K562 (cell line): ENCODE measurements at regions of chr6 and their contacts with region 1.

Region 1: DNA sequence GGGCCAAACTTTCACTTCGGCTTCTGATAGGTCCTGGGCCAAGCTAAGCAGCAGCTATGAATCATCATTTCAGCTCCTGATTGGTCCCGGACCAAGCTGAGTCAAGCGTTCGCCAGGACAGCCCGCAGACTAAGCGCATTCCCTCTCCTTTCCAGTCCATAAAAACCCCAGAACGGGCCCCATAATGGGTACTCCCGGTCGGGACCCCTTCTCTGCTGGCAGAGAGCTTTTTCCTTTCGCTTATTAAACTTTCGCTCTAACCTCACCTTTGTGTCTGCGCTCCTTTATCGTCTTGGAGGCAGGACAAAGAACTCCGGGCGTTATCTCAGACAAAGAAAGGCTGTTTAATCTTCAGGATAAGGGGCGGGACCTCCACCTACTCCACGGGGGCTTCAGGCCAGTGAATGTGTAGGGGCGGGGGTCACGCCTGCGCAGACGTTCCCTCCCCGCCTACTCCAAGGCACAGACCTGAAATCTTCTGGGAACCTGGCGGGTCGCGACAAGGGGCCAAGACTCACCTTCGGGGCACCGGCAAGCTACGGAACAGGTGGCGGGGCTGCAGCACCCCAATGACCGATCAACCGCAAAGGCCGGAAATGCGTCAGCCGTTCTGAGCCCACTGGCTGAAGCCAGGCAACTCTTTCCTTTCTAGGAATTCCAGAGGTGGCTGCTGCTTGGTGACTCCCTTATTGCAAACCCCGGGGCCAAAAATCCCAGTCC is at the start of gene ZSCAN31:
- DNase-seq: peak; percentile 97 to 99 (median 97)
- ATAC-seq: peak; percentile 91
- H3K4me3 ChIP-seq: peak within 1 kb of the TSS; percentile 69
- H3K27ac ChIP-seq: peak within 1 kb of the TSS; percentile 98
- H3K4me1 ChIP-seq: peaks cover 23 to 43% of the 10 kb centered on the region in 2 experiments
- H3K27me3 ChIP-seq: no peaks in the 10 kb centered on the region
- CTCF ChIP-seq: no peak
- EP300 ChIP-seq: peak; percentile 8; the same call in 1 of the 2 replicates
- POLR2A ChIP-seq: peak; percentile 99
- RAD21 ChIP-seq: peak in 1 of 2 experiments; percentile 17; a peak in 1 of 4 replicates
- polyA plus RNA-seq, gene ZSCAN31: 5.0 to 7.0 TPM

Region 2: GRCh38 chr6:27809939-27810767 is 525.6 kb before region 1 on chr6:
- CTCF ChIA-PET with region 1: no interaction called
- POLR2A ChIA-PET with region 1: interaction called, 4 read pairs
- in situ Hi-C with region 1: no loop called
- intact Hi-C with region 1: loop called (anchors 5 kb)
- DNase-seq: peak; percentile 70 to 96 (median 82)
- ATAC-seq: peak; percentile 60
- H3K4me3 ChIP-seq: peak overlapping the region; percentile 71
- H3K27ac ChIP-seq: peak overlapping the region; percentile 86
- H3K4me1 ChIP-seq: peaks cover 4 to 20% of the 10 kb centered on the region in 2 experiments; a peak in 4 of 5 replicates
- H3K27me3 ChIP-seq: no peaks in the 10 kb centered on the region
- CTCF ChIP-seq: peak in 2 of 3 experiments; percentile 25 to 36; a peak in 3 of 6 replicates
- EP300 ChIP-seq: 0 out of 2 replicates have a peak, but pooled peaks have one; percentile 2
- POLR2A ChIP-seq: peak; percentile 100
- RAD21 ChIP-seq: peak; percentile 10 to 35; a peak in 2 of 4 replicates

Region 3: GRCh38 chr6:27847706-27848105 is 488.0 kb before region 1 on chr6:
- CTCF ChIA-PET with region 1: no interaction called
- POLR2A ChIA-PET with region 1: no interaction called
- in situ Hi-C with region 1: no loop called
- intact Hi-C with region 1: no loop called
- DNase-seq: no peak
- ATAC-seq: peak; percentile 9; the same call in 2 of the 3 replicates
- H3K4me3 ChIP-seq: no peak overlapping the region
- H3K27ac ChIP-seq: no peak overlapping the region
- H3K4me1 ChIP-seq: no peaks in the 10 kb centered on the region
- H3K27me3 ChIP-seq: no peaks in the 10 kb centered on the region
- CTCF ChIP-seq: no peak
- EP300 ChIP-seq: no peak
- POLR2A ChIP-seq: 0 out of 2 replicates have a peak, but pooled peaks have one; percentile 17
- RAD21 ChIP-seq: no peak

Region 4: DNA sequence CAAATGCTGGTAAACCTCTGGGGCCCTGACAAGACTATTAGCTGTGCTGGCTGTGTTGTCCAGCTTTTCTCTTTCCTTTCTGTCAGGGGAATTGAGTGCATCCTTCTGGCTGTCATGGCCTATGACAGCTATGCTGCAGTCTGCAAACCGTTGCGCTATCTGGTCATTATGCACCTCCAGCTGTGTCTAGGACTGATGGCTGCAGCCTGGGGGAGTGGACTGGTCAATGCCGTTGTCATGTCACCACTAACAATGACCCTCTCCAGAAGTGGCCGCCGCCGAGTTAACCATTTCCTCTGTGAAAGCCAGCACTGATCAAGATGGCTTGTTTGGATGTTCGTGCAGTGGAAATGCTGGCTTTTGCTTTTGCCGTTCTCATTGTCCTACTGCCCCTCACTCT is 358.3 kb before region 1 on chr6:
- CTCF ChIA-PET with region 1: no interaction called
- POLR2A ChIA-PET with region 1: no interaction called
- in situ Hi-C with region 1: no loop called
- intact Hi-C with region 1: no loop called
- DNase-seq: peak in 3 of 4 experiments; percentile 18 to 68 (median 29)
- ATAC-seq: peak; percentile 98
- H3K4me3 ChIP-seq: no peak overlapping the region
- H3K27ac ChIP-seq: no peak overlapping the region
- H3K4me1 ChIP-seq: peaks cover 0 to 4% of the 10 kb centered on the region in 2 experiments; a peak in 1 of 5 replicates
- H3K27me3 ChIP-seq: no peaks in the 10 kb centered on the region
- CTCF ChIP-seq: peak in 2 of 3 experiments; percentile 15; a peak in 1 of 6 replicates
- EP300 ChIP-seq: peak; percentile 66
- POLR2A ChIP-seq: no peak
- RAD21 ChIP-seq: peak; percentile 13 to 48; a peak in 2 of 4 replicates

Region 5: GRCh38 chr6:28153546-28153945 is 182.2 kb before region 1 on chr6:
- CTCF ChIA-PET with region 1: no interaction called
- POLR2A ChIA-PET with region 1: interaction called, 11 read pairs
- in situ Hi-C with region 1: no loop called
- intact Hi-C with region 1: no loop called
- DNase-seq: no peak
- ATAC-seq: peak; percentile 42; the same call in 2 of the 3 replicates
- H3K4me3 ChIP-seq: no peak overlapping the region
- H3K27ac ChIP-seq: no peak overlapping the region
- H3K4me1 ChIP-seq: no peaks in the 10 kb centered on the region
- H3K27me3 ChIP-seq: no peaks in the 10 kb centered on the region
- CTCF ChIP-seq: no peak
- EP300 ChIP-seq: no peak
- POLR2A ChIP-seq: no peak
- RAD21 ChIP-seq: no peak

Region 6: DNA sequence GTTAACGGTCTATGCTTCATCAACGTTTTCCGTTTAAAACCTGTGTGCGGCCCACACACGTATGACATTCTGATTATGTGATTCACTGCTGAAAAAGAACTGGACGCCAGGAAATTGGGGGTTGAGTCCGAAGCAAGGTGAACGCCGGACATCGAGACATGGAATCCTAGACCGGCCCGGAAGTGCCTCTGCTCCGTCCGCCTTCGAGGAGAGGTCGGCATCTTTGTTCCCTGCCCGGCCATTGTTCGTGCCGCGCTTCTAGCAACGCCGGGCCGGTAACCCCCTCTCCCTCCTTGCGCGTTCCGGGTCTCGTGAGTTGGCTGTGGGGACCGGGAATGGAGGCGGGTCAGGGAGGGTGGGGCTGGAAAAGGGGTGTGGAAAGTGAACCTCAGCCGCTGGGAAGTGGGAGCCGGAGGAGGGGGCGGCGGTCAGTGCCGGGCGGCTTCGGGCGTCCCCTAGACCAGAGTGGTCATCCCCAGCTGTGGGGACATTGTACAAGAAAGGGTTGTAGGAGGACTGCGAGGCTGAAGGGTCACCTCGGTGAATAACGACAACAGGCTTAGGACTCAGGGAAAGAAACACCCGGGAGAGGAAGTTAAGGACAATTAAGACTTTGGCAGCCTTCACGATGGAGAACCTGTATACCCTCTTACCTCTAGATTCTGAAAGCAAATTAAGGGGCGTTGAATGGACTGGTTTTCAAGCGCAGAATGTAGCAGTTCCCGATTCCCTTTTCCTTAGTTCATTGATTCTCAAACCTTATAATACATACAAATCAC is 110.5 kb before region 1 on chr6 and contains the start of gene ZSCAN9:
- CTCF ChIA-PET with region 1: no interaction called
- POLR2A ChIA-PET with region 1: interaction called, 38 read pairs
- in situ Hi-C with region 1: no loop called
- intact Hi-C with region 1: loop called (anchors 5 kb)
- DNase-seq: peak; percentile 83 to 94 (median 90)
- ATAC-seq: peak; percentile 89
- H3K4me3 ChIP-seq: peak within 1 kb of the TSS; percentile 79
- H3K27ac ChIP-seq: peak within 1 kb of the TSS; percentile 85
- H3K4me1 ChIP-seq: peaks cover 7 to 47% of the 10 kb centered on the region in 2 experiments
- H3K27me3 ChIP-seq: no peaks in the 10 kb centered on the region
- CTCF ChIP-seq: no peak
- EP300 ChIP-seq: peak; percentile 67; the same call in 1 of the 2 replicates
- POLR2A ChIP-seq: peak; percentile 91
- RAD21 ChIP-seq: peak; percentile 21 to 29; a peak in 3 of 4 replicates
- polyA plus RNA-seq, gene ZSCAN9: 18.8 to 20.0 TPM

Region 7: GRCh38 chr6:28266962-28267694 is 68.6 kb before region 1 on chr6 and contains the start of gene ZSCAN26:
- CTCF ChIA-PET with region 1: no interaction called
- POLR2A ChIA-PET with region 1: interaction called, 26 read pairs
- in situ Hi-C with region 1: no loop called
- intact Hi-C with region 1: loop called (anchors 1 kb)
- DNase-seq: peak; percentile 85 to 95 (median 88)
- ATAC-seq: peak; percentile 95
- H3K4me3 ChIP-seq: peak within 1 kb of the TSS; percentile 61
- H3K27ac ChIP-seq: peak within 1 kb of the TSS; percentile 78
- H3K4me1 ChIP-seq: peaks cover 7 to 26% of the 10 kb centered on the region in 2 experiments
- H3K27me3 ChIP-seq: no peaks in the 10 kb centered on the region
- CTCF ChIP-seq: no peak; a peak in 1 of 6 replicates
- EP300 ChIP-seq: no peak
- POLR2A ChIP-seq: peak; percentile 92
- RAD21 ChIP-seq: peak; percentile 7 to 25; a peak in 2 of 4 replicates
- polyA plus RNA-seq, gene ZSCAN26: 7.3 to 12.8 TPM

Region 8: DNA sequence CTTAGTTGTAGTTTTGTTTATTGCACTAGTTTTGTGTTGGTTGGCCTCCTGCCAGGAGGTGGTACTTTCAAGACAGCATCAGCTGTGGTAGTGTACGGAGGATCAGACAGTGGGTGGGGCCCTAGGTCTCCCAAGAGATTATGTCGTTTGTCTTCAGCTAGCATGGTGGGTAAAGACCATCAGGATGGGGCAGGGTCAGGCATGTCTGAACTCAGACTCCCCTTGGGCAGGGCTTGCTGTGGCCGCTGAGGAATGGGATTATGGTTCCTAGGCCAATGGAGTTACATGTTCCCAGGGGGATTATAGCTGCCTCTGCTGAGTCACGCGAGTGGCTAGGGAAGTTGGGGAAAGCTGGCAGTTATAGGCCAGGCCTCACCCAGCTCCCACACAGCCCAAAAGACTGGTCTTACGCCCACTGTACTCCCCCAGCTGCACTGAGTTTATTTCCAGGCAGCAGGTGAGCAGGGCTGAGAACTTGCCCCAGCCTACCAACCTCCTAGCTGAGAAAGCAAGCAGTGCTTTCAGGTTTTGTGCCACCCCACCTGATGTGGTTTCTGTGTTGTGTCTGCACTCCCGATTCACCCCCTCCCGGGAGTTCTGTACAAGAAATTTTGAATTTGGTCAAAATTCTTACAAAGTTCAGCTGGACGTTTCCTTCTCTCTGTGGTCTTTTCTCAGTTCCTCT is 24.4 kb before region 1 on chr6:
- CTCF ChIA-PET with region 1: no interaction called
- POLR2A ChIA-PET with region 1: interaction called, 26 read pairs
- in situ Hi-C with region 1: no loop called
- intact Hi-C with region 1: no loop called
- DNase-seq: no peak
- ATAC-seq: peak; percentile 56; the same call in 2 of the 3 replicates
- H3K4me3 ChIP-seq: no peak overlapping the region
- H3K27ac ChIP-seq: no peak overlapping the region
- H3K4me1 ChIP-seq: peaks cover 6 to 13% of the 10 kb centered on the region in 2 experiments; a peak in 4 of 5 replicates
- H3K27me3 ChIP-seq: no peaks in the 10 kb centered on the region
- CTCF ChIP-seq: no peak
- EP300 ChIP-seq: no peak
- POLR2A ChIP-seq: no peak
- RAD21 ChIP-seq: no peak

Region 9: GRCh38 chr6:28349892-28350737 is 14.4 kb after region 1 on chr6 and contains the start of gene ZKSCAN3:
- CTCF ChIA-PET with region 1: no interaction called
- POLR2A ChIA-PET with region 1: interaction called, 80 read pairs
- in situ Hi-C with region 1: no loop called
- intact Hi-C with region 1: loop called (anchors 1 kb)
- DNase-seq: peak; percentile 87 to 98 (median 90)
- ATAC-seq: peak; percentile 93
- H3K4me3 ChIP-seq: peak within 1 kb of the TSS; percentile 68
- H3K27ac ChIP-seq: peak within 1 kb of the TSS; percentile 86
- H3K4me1 ChIP-seq: peaks cover 24 to 48% of the 10 kb centered on the region in 2 experiments
- H3K27me3 ChIP-seq: no peaks in the 10 kb centered on the region; a peak in 1 of 5 replicates
- CTCF ChIP-seq: no peak; a peak in 1 of 6 replicates
- EP300 ChIP-seq: peak; percentile 64
- POLR2A ChIP-seq: peak; percentile 96
- RAD21 ChIP-seq: peak; percentile 4 to 48; a peak in 3 of 4 replicates
- polyA plus RNA-seq, gene ZKSCAN3: 3.0 to 4.3 TPM

Region 10: GRCh38 chr6:30075161-30075986 is 1739.7 kb after region 1 on chr6 and contains the start of gene RNF39:
- CTCF ChIA-PET with region 1: no interaction called
- POLR2A ChIA-PET with region 1: no interaction called
- in situ Hi-C with region 1: no loop called
- intact Hi-C with region 1: no loop called
- DNase-seq: peak; percentile 40 to 62 (median 61)
- ATAC-seq: peak; percentile 79
- H3K4me3 ChIP-seq: no peak within 1 kb of the TSS
- H3K27ac ChIP-seq: no peak within 1 kb of the TSS
- H3K4me1 ChIP-seq: peaks cover 0 to 27% of the 10 kb centered on the region in 2 experiments; a peak in 2 of 5 replicates
- H3K27me3 ChIP-seq: peaks cover 25 to 44% of the 10 kb centered on the region in 2 experiments; a peak in 4 of 5 replicates
- CTCF ChIP-seq: peak; percentile 58 to 77 (median 65)
- EP300 ChIP-seq: no peak
- POLR2A ChIP-seq: no peak
- RAD21 ChIP-seq: peak in 1 of 2 experiments; percentile 36; a peak in 1 of 4 replicates
- polyA plus RNA-seq, gene RNF39: not detected